GM10248 (cell line): ENCODE measurements at regions of chr19 and their contacts with region 1.

Region 1: DNA sequence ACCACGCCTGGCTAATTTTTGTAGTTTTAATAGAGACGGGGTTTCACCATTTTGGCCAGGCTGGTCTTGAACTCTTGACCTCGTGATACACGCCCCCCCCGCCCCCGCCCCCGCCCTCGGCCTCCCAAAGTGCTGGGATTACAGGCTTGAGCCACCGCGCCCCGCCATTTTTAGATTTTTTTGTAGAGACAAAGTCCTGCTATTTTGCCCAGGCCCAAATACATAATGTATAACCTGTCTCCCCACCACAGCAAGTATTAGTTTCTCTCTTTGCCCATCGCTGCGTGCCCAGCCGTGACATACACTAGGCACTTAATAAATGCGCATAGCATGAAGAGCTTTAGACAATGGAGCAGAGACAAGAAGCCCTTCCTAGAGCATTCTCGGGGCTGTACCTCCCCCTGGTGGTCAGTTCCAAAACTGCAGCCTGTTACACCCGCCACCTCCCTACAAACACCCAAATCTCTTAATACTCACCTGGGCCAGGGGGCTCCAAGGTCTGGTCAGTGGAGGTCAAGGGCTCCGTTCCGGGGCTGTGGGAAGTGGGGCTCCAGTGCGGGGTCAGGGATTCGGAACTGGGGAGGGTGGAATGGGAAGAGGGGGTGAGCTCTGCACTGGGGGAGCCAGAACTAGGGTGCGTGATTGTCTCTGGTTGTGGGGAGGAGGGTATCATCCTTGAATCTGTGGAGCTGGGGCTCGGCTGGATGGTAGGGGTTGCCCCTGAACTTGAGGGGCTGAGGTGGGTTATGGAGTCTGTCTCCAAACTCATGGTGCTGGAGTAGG is 22.5 kb downstream of the IQCN start:
- DNase-seq: peak; percentile 89
- CTCF ChIP-seq: peak; percentile 92

Region 2: DNA sequence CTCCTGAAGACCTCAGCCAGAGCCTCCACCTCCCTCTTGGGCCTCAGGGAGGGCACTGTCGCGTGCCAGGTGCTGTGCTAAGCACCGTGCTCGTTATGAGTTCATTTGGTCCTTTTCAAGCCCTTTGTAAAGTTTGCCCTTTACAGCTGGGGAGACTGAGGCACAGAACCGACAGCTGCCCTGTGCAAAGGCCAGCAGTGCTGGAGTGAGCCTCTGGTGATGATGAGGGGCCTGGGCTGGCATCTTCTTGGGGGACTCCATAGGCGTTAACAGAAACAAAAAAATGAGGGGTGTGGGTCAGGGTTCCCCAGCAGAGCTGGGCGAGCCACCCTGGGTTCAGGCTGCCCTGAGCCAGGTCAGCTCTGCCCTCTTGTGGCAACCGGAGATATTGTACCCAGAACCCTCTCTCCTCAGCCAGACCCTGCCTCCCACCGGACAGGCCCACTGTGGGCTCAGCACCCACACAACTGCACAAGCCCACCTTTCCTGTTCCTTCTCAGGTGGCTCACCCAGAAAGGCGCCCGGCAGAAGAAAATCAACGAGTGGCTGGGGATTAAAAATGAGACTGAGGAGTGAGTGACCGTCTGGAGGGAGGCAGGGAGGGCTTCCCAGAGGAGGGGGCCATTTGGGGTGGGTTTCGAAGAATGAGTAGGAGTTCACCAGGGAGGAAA is 83.7 kb before region 1 on chr19:
- CTCF ChIA-PET with region 1: interaction called, 12 read pairs
- POLR2A ChIA-PET with region 1: no interaction called
- DNase-seq: peak; percentile 89
- CTCF ChIP-seq: peak; percentile 79

Region 3: DNA sequence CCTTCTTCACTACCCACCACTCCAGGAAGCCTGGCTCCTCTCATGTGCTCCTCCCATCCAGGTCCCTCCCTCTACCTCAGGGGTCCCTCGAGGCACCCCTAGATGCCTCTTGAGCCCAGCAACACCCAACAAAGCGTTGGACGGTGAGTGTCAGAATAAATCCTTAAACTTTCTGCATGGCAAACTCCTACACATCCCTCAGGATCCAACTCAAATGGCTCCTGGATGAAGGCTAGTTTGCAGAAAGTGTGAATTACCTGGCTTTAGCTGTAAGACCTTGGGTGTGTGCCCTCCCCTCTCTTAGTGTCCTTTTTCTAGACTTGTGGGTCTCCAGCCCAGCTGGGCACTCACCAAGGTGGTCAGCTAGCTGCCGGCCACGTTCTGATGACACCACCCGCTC is 53.4 kb before region 1 on chr19:
- CTCF ChIA-PET with region 1: interaction called, 228 read pairs
- POLR2A ChIA-PET with region 1: no interaction called
- DNase-seq: no peak
- CTCF ChIP-seq: no peak

Region 4: GRCh38 chr19:18224525-18225354 is 27.0 kb before region 1 on chr19:
- CTCF ChIA-PET with region 1: interaction called, 40 read pairs
- POLR2A ChIA-PET with region 1: no interaction called
- DNase-seq: peak; percentile 97
- CTCF ChIP-seq: no peak

Region 5: GRCh38 chr19:18239303-18239702 is 12.5 kb before region 1 on chr19:
- CTCF ChIA-PET with region 1: interaction called, 59 read pairs
- POLR2A ChIA-PET with region 1: no interaction called
- DNase-seq: no peak
- CTCF ChIP-seq: no peak

Region 6: DNA sequence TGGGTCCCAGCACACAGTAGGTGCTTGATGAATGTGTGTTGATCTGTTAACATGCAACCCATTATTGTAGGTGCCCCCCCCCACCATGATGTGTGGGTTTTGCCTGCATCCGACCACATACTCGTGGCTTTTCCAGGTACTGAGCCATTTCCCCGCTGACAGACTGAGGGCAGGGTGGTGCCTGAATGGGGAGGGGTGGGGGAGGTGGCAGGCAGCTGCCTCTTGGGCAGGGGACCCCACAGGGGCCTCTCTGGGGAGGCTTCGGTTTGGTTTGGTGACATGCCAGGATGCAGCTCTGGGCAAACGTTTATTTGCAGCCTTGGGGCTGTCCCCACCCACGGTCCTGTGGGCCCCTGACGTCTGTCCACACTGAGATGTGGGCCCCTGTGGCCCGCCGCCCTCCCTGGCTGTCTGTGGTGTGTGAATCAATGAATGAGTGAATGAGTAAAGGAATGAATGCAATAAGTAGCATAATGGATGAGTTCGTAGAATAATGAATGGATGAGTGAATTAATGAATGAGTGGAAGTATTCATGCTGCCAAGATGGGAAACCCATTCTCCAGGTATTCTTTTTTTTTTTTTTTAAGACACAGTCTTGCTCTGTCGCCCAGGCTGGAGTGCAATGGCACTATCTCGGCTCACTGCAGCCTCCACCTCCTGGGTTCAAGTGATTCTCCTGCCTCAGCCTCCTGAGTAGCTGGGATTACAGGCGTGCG is 38.7 kb after region 1 on chr19:
- CTCF ChIA-PET with region 1: no interaction called
- POLR2A ChIA-PET with region 1: no interaction called
- DNase-seq: peak; percentile 79
- CTCF ChIP-seq: no peak

Region 7: GRCh38 chr19:18349524-18350128 is 97.8 kb after region 1 on chr19:
- CTCF ChIA-PET with region 1: no interaction called
- POLR2A ChIA-PET with region 1: no interaction called
- DNase-seq: peak; percentile 68
- CTCF ChIP-seq: peak; percentile 67